MCF 10A (cell line): ENCODE measurements at regions of chr1 and their contacts with region 1.

Region 1: DNA sequence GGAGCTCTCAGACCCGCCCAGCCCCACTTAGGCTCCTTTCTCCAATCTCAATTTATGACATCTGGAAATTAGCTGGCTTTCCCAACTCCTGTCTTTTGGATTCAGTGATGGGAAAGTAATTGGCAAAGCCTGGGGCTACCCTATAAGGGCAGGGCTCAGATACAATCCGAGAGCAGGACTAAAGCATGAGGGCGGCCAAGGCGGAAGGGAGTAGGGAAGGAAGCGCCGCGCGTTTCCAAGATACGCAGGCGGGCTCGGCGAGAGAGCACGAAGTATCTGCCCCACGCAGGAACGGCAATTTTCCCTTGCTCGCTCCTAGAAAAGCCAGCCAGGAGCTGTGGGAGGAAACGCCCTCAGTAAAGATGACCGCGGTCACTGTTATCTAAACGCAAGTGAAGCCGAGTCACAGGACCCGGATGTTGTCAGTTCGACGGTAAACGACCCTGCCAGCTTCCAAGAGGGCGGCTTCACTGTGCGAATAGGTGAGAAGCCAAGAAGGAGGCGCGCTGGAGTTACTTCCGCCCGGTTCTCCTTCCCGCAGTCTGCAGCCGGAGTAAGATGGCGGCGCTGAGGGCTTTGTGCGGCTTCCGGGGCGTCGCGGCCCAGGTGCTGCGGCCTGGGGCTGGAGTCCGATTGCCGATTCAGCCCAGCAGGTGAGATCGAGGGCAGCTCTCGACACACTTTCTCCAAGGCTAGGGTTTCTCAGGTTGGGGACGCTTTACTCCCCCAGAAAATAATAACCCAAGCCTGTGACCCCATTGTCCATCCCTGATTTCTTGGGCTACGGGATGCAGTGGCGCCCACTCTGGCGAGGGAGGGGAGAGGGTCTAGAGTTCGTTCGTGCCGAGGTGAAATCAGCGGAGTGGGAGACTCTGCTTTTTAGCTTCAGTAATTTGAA is at the start of gene NDUFS2:
- DNase-seq: peak; percentile 100
- H3K4me3 Mint-ChIP-seq: peak within 1 kb of the TSS; percentile 85
- H3K27ac Mint-ChIP-seq: peak within 1 kb of the TSS; percentile 96
- H3K4me1 Mint-ChIP-seq: peaks cover 66% of the 10 kb centered on the region
- H3K27me3 Mint-ChIP-seq: no peaks in the 10 kb centered on the region
- CTCF ChIP-seq: no peak
- total RNA-seq, gene NDUFS2: 139 and 149 TPM in 2 replicates

Region 2: DNA sequence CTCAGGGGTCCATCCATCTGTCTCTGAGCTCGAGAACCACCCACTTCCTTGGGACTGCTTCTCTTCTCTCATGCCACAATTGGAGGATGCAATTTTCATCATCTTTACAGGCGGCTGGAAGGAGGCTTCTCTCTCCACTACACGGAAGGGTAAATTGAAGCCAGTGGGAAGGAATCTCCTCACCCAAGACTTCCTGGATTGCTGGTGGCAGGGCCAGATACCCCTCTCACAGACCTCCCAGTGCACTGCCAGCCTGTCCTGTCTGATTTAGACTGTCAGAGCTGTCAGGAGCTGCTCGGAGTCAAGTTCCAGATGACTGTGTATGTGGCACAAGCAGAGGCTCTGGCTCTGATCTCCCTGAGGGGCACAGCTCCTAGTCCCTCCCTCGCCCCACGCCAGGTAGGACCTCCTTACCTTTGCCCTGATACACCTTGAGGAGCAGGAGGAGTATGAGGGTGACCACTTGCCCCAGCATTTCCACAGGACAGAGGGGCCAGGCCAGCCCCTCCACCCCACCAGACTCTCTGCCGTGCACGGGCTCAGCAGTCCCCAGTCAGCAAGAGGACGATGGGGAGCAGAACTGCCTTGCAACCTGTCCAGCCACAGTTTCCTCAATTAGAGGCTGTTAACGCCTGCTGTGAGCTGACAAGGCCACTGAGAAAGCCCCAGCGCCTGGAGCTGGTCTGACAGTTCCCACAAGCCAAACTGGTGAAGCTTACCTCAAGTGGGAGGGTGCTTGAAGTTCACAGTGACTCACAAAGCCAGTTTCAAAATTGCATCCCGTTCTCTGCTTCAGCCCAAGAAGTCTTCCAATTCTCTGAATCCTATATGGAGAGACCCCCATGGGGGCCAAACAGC is 339.6 kb before region 1 on chr1 and contains the start of gene CD244:
- CTCF ChIA-PET with region 1: no interaction called
- POLR2A ChIA-PET with region 1: no interaction called
- intact Hi-C with region 1: no loop called
- DNase-seq: no peak
- H3K4me3 Mint-ChIP-seq: no peak within 1 kb of the TSS
- H3K27ac Mint-ChIP-seq: no peak within 1 kb of the TSS
- H3K4me1 Mint-ChIP-seq: no peaks in the 10 kb centered on the region
- H3K27me3 Mint-ChIP-seq: no peaks in the 10 kb centered on the region
- CTCF ChIP-seq: no peak
- total RNA-seq, gene CD244: not detected in 2 replicates

Region 3: GRCh38 chr1:161132410-161133219 is 69.5 kb before region 1 on chr1 and contains the start of gene DEDD:
- CTCF ChIA-PET with region 1: interaction called, 3 read pairs
- POLR2A ChIA-PET with region 1: interaction called, 12 read pairs
- intact Hi-C with region 1: no loop called
- DNase-seq: peak; percentile 99
- H3K4me3 Mint-ChIP-seq: no peak within 1 kb of the TSS
- H3K27ac Mint-ChIP-seq: no peak within 1 kb of the TSS
- H3K4me1 Mint-ChIP-seq: peaks cover 23% of the 10 kb centered on the region
- H3K27me3 Mint-ChIP-seq: no peaks in the 10 kb centered on the region
- CTCF ChIP-seq: no peak
- total RNA-seq, gene DEDD: 63.1 and 73.6 TPM in 2 replicates

Region 4: GRCh38 chr1:161159087-161159912 is 42.8 kb before region 1 on chr1 and contains the start of gene USP21:
- CTCF ChIA-PET with region 1: interaction called, 25 read pairs
- POLR2A ChIA-PET with region 1: interaction called, 51 read pairs
- intact Hi-C with region 1: no loop called
- DNase-seq: peak; percentile 94
- H3K4me3 Mint-ChIP-seq: peak within 1 kb of the TSS; percentile 87
- H3K27ac Mint-ChIP-seq: peak within 1 kb of the TSS; percentile 94
- H3K4me1 Mint-ChIP-seq: peaks cover 45% of the 10 kb centered on the region
- H3K27me3 Mint-ChIP-seq: no peaks in the 10 kb centered on the region
- CTCF ChIP-seq: peak; percentile 55
- total RNA-seq, gene USP21: 33.8 and 36.6 TPM in 2 replicates

Region 5: DNA sequence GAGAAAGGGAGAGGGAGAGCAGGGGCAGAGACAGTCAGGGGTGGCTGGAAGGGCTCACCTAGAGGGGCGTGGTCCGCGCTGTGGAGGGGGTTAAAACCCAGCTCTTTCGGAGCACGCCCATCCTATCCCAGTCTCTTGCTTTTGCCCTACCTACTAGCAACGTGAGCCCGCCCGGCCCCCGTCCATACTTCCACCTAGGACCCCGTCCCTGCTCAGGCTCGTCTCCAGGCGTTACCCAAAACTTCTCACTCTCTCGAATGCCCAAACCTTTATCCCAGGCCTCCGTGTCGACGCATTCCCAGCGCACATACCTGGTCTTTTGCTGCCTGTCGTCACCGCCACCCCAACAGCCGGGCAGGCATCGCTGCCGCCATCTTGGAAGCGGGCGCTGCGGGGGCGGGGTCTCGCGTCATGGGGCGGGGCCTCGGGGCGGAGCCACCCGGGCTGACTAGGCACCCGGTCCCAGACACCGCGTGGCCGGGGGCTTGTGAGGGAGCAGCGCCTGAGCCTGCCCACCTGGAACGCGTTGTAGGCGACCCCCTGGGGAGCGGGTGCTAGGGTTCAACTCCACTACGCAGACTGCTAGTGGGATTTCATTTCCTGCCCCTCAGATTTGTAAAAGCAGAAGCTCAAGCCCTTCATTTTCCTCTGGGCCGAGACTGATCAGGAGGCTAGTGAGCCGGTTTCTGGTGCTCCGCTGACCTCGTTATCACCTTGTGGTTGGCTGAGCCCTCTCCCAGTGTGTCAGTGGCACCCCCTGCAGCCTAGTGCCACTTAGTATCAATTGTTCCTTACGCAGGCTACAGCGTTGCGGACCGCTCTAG is 24.8 kb before region 1 on chr1 and contains the start of gene B4GALT3:
- CTCF ChIA-PET with region 1: interaction called, 9 read pairs
- POLR2A ChIA-PET with region 1: interaction called, 58 read pairs
- intact Hi-C with region 1: no loop called
- DNase-seq: peak; percentile 87
- H3K4me3 Mint-ChIP-seq: peak within 1 kb of the TSS; percentile 86
- H3K27ac Mint-ChIP-seq: peak within 1 kb of the TSS; percentile 92
- H3K4me1 Mint-ChIP-seq: peaks cover 37% of the 10 kb centered on the region
- H3K27me3 Mint-ChIP-seq: no peaks in the 10 kb centered on the region
- CTCF ChIP-seq: no peak
- total RNA-seq, gene B4GALT3: 50.0 and 51.7 TPM in 2 replicates

Region 6: GRCh38 chr1:161216945-161217712 is 15.1 kb after region 1 on chr1:
- CTCF ChIA-PET with region 1: interaction called, 444 read pairs
- POLR2A ChIA-PET with region 1: interaction called, 20 read pairs
- intact Hi-C with region 1: no loop called
- DNase-seq: peak; percentile 79
- H3K4me3 Mint-ChIP-seq: no peak overlapping the region
- H3K27ac Mint-ChIP-seq: no peak overlapping the region
- H3K4me1 Mint-ChIP-seq: peaks cover 6% of the 10 kb centered on the region
- H3K27me3 Mint-ChIP-seq: no peaks in the 10 kb centered on the region
- CTCF ChIP-seq: no peak

Region 7: GRCh38 chr1:161382214-161383019 is 180.3 kb after region 1 on chr1:
- CTCF ChIA-PET with region 1: interaction called, 69 read pairs
- POLR2A ChIA-PET with region 1: interaction called, 32 read pairs
- intact Hi-C with region 1: no loop called
- DNase-seq: peak; percentile 78
- H3K4me3 Mint-ChIP-seq: peak overlapping the region; percentile 11
- H3K27ac Mint-ChIP-seq: peak overlapping the region; percentile 37
- H3K4me1 Mint-ChIP-seq: peaks cover 22% of the 10 kb centered on the region
- H3K27me3 Mint-ChIP-seq: no peaks in the 10 kb centered on the region
- CTCF ChIP-seq: peak; percentile 68